Calu3 (cell line): ENCODE measurements at regions of chr2 and their contacts with region 1.

Region 1: GRCh38 chr2:38740851-38741731 is 10.1 kb downstream of the SRSF7 start:
- DNase-seq: no peak
- H3K4me3 Mint-ChIP-seq: no peak overlapping the region
- H3K27ac Mint-ChIP-seq: peak overlapping the region; percentile 20
- H3K4me1 Mint-ChIP-seq: peaks cover 9% of the 10 kb centered on the region
- H3K27me3 Mint-ChIP-seq: no peaks in the 10 kb centered on the region
- CTCF ChIP-seq: peak; percentile 63

Region 2: DNA sequence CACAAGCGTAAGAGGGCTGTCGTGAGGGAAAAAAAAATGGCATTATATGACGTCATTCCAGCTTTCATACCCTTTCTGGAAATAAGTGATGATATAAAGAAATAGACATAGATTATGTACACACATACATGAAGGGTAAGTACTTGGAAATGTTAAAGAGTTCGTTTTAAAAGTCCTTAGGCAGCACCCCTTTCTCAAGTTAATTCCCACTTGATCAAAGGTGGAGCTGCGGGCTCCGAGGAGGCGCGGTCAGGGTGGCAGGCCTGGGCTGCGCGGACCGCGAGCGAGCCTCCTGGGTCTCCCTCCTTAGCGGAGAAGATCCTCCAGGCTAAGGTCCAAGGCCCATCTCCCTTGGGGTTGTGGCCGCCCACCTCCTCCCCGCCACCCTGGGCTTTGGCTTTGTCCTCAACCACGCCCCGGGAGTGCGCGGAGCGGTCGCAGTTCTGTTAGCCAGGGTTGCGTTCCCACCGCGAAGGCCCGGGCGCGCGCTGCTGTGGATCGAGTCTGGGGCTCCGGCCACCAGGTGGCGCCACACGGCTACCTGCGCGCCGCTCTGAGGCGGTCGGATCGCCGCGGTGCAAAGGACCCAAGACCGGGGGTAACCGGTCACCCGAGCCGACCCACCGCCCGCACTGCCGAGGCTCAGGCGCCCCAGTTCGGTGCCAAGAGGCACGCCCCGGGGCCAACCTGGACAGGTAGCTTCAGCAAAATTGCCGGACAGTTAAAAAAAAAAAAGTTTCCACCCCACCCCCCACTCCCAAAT is 205.2 kb before region 1 on chr2:
- CTCF ChIA-PET with region 1: interaction called, 4 read pairs
- intact Hi-C with region 1: loop called (anchors 5 kb)
- DNase-seq: peak; percentile 92
- H3K4me3 Mint-ChIP-seq: peak overlapping the region; percentile 69
- H3K27ac Mint-ChIP-seq: no peak overlapping the region
- H3K4me1 Mint-ChIP-seq: no peaks in the 10 kb centered on the region
- H3K27me3 Mint-ChIP-seq: peaks cover 13% of the 10 kb centered on the region
- CTCF ChIP-seq: peak; percentile 92

Region 3: GRCh38 chr2:39213015-39213414 is 471.9 kb after region 1 on chr2:
- CTCF ChIA-PET with region 1: no interaction called
- intact Hi-C with region 1: no loop called
- DNase-seq: no peak
- H3K4me3 Mint-ChIP-seq: no peak overlapping the region
- H3K27ac Mint-ChIP-seq: no peak overlapping the region
- H3K4me1 Mint-ChIP-seq: no peaks in the 10 kb centered on the region
- H3K27me3 Mint-ChIP-seq: no peaks in the 10 kb centered on the region
- CTCF ChIP-seq: no peak